ENCODE measurements at regions of chr12 and their contacts with region 1.

Region 1: DNA sequence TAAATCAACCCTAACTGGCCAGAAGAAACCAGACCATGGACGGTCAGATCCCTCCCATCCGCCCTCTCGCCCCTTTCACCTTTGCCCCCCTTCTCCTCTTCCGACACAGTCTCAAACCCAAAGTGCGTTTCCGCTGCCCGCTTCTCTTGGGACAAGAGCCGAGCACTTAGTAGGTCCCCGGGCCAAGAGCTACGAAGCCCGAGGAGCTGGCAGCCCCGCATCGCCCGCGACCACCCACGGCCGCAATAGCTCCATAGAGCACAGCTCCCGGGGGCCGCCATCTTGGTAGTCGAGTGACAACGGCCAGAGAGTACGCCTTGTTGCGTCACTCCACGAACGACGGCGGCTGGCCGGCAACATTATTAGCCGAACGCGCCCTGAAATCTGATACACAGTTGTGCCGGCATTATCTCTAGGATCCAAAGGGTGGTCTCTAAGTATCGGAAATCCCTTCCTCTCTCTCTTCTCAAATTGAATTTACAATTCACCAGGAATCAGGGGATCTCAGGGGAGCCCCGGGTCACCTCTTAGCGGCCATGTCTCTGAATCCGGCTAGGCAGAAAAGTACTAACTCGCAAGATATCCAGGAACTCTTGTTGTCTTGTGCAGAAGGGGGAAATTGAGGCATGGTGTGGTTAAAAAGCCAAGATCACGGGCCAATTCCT is at the start of gene COQ5:
- DNase-seq: no peak
- ATAC-seq: peak; percentile 91
- H3K4me3 ChIP-seq: peak within 1 kb of the TSS; percentile 63 to 77
- H3K27ac ChIP-seq: peak within 1 kb of the TSS; percentile 96
- H3K4me1 ChIP-seq: peaks cover 8% of the 10 kb centered on the region
- H3K27me3 ChIP-seq: no peaks in the 10 kb centered on the region
- CTCF ChIP-seq: no peak
- total RNA-seq, gene COQ5: 42.9 TPM

Region 2: GRCh38 chr12:120292661-120293531 is 236.1 kb before region 1 on chr12 and contains the start of gene RNU4-1:
- CTCF ChIA-PET with region 1: no interaction called
- POLR2A ChIA-PET with region 1: no interaction called
- in situ Hi-C with region 1: no loop called
- intact Hi-C with region 1: no loop called
- DNase-seq: peak; percentile 86
- ATAC-seq: peak; percentile 69
- H3K4me3 ChIP-seq: peak within 1 kb of the TSS; percentile 43 to 87
- H3K27ac ChIP-seq: peak within 1 kb of the TSS; percentile 98
- H3K4me1 ChIP-seq: peaks cover 15% of the 10 kb centered on the region
- H3K27me3 ChIP-seq: no peaks in the 10 kb centered on the region
- CTCF ChIP-seq: no peak
- total RNA-seq, gene RNU4-1: 1,565 TPM

Region 3: DNA sequence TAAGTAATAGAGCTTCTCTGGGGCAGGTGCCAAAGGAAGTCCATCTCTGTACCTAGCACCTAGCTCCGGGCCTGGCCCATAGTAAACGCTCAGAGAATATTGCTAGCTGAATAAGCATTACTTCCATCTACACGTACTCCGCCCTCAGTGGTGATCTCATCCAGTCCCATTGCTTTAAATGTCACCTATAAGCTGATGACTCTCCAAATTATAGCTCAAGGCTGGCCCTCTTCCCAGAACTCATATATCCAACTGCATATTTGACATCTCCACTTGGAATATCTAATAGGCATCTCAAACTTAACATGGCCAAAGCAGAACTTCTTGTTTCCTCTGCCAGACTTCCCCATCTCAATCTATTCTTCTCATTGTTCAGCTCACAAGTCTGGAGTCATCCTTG is 40.0 kb before region 1 on chr12:
- CTCF ChIA-PET with region 1: no interaction called
- POLR2A ChIA-PET with region 1: no interaction called
- in situ Hi-C with region 1: no loop called
- intact Hi-C with region 1: no loop called
- DNase-seq: no peak
- ATAC-seq: no peak
- H3K4me3 ChIP-seq: no peak overlapping the region
- H3K27ac ChIP-seq: no peak overlapping the region
- H3K4me1 ChIP-seq: no peaks in the 10 kb centered on the region
- H3K27me3 ChIP-seq: no peaks in the 10 kb centered on the region
- CTCF ChIP-seq: no peak

Region 4: GRCh38 chr12:120890741-120891362 is 361.9 kb after region 1 on chr12:
- CTCF ChIA-PET with region 1: no interaction called
- POLR2A ChIA-PET with region 1: interaction called, 19 read pairs
- in situ Hi-C with region 1: no loop called
- intact Hi-C with region 1: no loop called
- DNase-seq: no peak
- ATAC-seq: no peak
- H3K4me3 ChIP-seq: no peak overlapping the region
- H3K27ac ChIP-seq: no peak overlapping the region
- H3K4me1 ChIP-seq: peaks cover under 1% of the 10 kb centered on the region; the same call in 1 of the 2 replicates
- H3K27me3 ChIP-seq: no peaks in the 10 kb centered on the region
- CTCF ChIP-seq: no peak

Measured in Panc1 (cell line).